Posterior vena cava (tissue), 2 donors: ENCODE measurements at regions of chr5 and their contacts with region 1.

Region 1: GRCh38 chr5:86605881-86606280 is 11.9 kb upstream of the COX7C start:
- DNase-seq: no peak

Region 2: GRCh38 chr5:86679949-86680348 is 74.1 kb after region 1 on chr5:
- intact Hi-C with region 1: loop called in 1 of 2 experiments (anchors 2 kb)
- DNase-seq: no peak